ENCODE measurements at regions of chr6 and their contacts with region 1.

Region 1: DNA sequence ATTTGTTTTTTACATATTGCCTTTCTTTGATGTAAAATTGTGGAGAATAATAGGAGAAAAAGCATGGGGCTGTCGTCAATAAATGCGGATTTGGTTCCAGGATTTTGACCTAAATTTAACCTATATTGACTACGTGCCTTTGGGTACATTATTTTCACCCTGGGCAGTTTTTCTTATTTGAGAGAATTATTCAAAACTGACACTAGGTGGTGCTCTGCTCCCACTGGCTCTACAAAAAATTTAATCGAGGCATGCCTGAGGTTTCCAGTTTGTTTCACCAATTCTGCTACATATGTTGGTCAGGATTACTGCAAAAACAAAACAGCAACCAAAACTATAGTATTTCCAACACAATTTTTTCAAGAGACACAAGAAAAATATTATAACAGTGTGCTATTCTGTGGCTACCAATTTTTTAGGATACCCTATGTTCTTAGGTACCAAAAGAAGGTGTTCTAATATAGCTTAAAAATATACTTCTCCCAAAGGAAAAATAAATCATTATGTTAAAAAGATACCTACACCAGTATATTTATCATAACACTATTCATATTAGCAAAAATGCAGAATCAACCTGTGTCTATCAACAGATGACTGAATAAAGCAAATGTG is 48.6 kb upstream of the FABP7 start:
- DNase-seq: no peak
- H3K4me3 ChIP-seq: no peak overlapping the region
- H3K27ac ChIP-seq: no peak overlapping the region
- H3K4me1 ChIP-seq: no peaks in the 10 kb centered on the region
- H3K27me3 ChIP-seq: no peaks in the 10 kb centered on the region
- CTCF ChIP-seq: peak; percentile 61 to 88 (median 76)
- POLR2A ChIP-seq: no peak

Region 2: DNA sequence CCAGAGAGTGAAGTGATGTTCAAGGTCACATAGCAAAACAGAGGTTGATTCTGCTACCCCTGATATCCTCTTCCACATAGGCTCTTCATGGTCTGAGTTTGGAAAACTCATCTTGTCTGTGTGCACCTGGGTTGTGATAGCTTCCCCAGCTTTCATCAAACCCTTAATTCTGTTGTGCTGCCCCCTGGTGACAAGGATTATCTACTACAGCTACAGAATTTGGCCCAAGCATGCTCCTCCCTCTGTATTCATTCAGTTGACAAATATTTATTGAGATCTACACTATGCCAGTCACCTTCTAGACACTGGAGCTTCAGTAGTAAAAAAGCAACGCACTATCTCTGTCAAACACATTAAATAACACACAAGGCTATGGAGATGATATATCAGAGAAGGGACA is 108.6 kb after region 1 on chr6:
- intact Hi-C with region 1: loop called (anchors 5 kb)
- DNase-seq: peak; percentile 53 to 56
- H3K4me3 ChIP-seq: no peak overlapping the region
- H3K27ac ChIP-seq: no peak overlapping the region
- H3K4me1 ChIP-seq: no peaks in the 10 kb centered on the region
- H3K27me3 ChIP-seq: no peaks in the 10 kb centered on the region
- CTCF ChIP-seq: peak; percentile 33 to 73 (median 64)
- POLR2A ChIP-seq: no peak

Region 3: DNA sequence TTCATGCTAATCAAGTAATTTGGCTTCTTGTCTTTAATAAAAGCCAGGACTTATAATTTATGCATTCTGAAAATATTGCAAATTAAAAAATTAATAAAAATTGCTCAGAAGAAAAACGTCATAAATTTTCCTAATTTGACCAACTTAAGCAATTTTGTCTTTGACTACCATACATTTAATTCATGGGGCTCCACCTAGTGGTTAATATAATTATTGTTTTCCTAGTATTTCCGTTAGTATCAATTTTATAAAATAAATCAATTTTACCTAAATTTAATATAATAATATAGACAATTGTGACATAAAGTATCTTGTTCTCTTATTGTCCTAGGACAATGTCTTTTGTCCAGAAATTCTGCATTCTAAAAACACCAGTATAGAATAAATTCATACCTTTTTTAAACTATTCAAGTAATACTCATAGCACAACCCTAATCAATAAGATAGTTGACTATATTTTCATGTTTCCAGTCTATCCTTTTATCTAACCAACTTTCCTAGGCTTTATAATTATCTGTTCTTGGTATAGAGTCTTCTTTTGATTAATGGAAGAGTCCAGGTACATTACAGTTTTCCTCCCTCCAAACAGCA is 585.9 kb after region 1 on chr6:
- intact Hi-C with region 1: loop called (anchors 10 kb)
- DNase-seq: no peak
- H3K4me3 ChIP-seq: no peak overlapping the region
- H3K27ac ChIP-seq: no peak overlapping the region
- H3K4me1 ChIP-seq: no peaks in the 10 kb centered on the region
- H3K27me3 ChIP-seq: no peaks in the 10 kb centered on the region
- CTCF ChIP-seq: peak in 5 of 6 experiments; percentile 37 to 57 (median 47)
- POLR2A ChIP-seq: no peak